Aorta (tissue), 5 donors: ENCODE measurements at regions of chr6 and their contacts with region 1.

Region 1: DNA sequence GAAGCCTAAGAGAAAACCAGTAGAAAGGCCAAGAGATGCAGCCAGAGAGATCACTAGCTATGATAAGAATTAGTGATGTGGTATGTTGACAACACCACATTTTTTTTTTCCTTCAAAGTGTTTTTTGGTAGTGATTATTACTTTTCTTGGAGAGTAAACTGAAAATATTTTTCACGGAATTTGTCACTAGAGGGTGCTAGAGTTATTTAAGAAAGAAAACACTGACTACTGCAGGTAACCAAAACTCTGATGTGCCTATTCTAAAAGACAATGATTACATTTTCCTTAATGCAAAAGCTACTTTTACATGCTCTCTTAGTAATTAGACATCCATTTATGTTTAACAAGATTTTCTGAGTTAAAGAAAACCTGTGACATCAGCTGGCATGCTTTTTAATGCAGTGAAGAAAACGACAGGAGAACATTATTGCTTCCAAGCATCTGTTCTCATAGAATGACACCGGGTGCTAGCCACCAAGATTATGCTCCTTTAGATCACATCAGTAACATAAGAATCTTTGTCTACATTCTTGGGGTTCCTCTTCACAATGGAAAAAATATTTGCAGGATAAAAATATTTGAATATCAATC is 28.8 kb downstream of the RWDD2A start:
- DNase-seq: no peak
- ATAC-seq: no peak
- H3K4me3 ChIP-seq: no peak overlapping the region
- H3K27ac ChIP-seq: no peak overlapping the region
- H3K4me1 ChIP-seq: peaks cover 0 to 3% of the 10 kb centered on the region in 2 donors
- H3K27me3 ChIP-seq: no peaks in the 10 kb centered on the region

Region 2: DNA sequence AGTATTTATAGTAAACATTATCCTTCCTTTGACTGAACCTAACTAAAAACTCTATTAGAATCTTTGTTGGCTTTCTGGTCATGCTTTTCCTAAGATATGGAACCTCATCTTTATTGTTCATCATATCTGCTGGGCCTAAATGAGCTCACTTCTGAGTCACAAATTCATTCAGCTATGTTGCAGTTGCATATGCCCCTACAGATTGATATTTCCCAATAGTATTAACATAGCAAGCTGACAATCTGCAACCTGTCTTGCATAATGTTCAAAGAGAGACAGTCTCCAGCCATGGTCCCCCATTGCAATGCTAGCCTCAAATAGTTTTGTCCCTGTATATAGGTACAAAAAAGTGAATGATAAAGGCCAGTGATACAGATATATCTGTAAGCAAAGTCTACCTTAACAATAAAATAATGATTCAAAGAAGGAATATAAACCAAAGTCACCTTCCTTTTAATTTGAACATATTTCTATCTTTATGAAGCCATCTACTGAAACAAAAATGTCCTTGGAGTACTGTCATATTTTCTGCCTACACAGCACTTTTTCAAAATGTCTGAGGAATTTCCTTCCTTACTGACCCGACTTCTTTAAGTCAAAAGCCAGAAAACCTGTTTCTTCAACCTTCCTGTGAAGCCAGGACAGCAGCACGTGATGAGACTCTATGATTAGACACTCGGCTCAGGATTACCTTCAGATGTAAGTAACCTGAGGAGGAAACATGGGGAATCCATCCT is 297.0 kb before region 1 on chr6:
- intact Hi-C with region 1: no loop called
- DNase-seq: no peak
- ATAC-seq: no peak
- H3K4me3 ChIP-seq: no peak overlapping the region
- H3K27ac ChIP-seq: no peak overlapping the region
- H3K4me1 ChIP-seq: no peaks in the 10 kb centered on the region
- H3K27me3 ChIP-seq: no peaks in the 10 kb centered on the region

Region 3: GRCh38 chr6:83378621-83379388 is 156.8 kb after region 1 on chr6:
- intact Hi-C with region 1: loop called in 1 of 2 experiments (anchors 10 kb)
- DNase-seq: no peak
- ATAC-seq: no peak
- H3K4me3 ChIP-seq: no peak overlapping the region
- H3K27ac ChIP-seq: no peak overlapping the region
- H3K4me1 ChIP-seq: peaks cover 0 to 1% of the 10 kb centered on the region in 2 donors
- H3K27me3 ChIP-seq: no peaks in the 10 kb centered on the region

Region 4: GRCh38 chr6:83417880-83418663 is 196.1 kb after region 1 on chr6:
- intact Hi-C with region 1: loop called (anchors 5 to 10 kb)
- DNase-seq: no peak
- ATAC-seq: peak; percentile 84
- H3K4me3 ChIP-seq: no peak overlapping the region
- H3K27ac ChIP-seq: no peak overlapping the region
- H3K4me1 ChIP-seq: peaks cover 0 to 2% of the 10 kb centered on the region in 2 donors
- H3K27me3 ChIP-seq: no peaks in the 10 kb centered on the region

Region 5: DNA sequence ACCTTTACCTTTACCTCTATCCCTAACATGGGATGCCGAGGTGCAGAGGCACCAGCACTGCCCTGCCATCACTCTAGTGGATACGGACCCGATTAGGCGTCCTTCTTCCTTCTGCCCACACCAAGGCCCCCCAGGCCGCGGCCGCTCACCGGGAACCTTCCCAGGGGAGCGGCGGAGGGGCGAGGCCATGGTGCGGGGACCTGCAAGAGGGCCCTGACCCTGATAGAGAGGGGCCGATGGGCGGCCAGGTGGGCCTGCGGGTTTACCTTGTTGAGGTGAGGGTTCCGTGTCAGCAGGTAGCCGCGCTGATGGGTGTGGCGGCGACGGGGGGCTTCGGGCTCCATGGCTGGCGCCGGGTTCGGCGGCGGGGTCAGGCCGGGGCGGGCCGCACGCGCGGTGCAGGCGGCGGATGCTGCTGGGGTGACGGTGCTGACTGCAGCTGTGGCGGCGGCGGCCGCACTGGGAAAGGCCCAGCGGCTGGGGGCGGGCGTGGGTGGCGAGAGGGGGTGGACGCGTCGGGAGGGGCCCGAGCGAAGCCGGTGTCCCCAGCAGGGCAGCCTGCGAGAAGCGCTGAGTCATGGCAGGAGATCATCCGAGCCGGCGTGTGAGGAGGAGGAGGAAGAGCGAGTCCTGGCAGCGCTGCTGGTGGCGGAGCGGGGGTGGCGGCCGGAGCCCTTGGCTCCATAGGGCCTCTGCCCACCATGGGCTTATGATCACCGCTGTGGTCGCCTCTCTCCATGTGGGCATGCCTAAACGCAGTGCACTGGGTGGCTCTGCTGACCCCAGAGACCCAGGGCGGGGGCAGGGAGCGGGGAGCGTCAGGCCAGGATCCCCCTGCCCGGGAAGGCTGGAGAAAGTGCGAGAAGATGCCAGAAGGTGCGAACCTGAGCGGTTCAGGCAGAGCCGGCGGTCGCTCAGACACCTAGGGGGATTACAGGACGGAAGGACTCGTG is 208.9 kb after region 1 on chr6 and contains the start of gene ME1:
- intact Hi-C with region 1: loop called (anchors 5 to 10 kb)
- DNase-seq: peak; percentile 93 to 95
- ATAC-seq: peak; percentile 91
- H3K4me3 ChIP-seq: peak within 1 kb of the TSS; percentile 19 to 69
- H3K27ac ChIP-seq: peak within 1 kb of the TSS in 1 of 2 donors; percentile 52
- H3K4me1 ChIP-seq: no peaks in the 10 kb centered on the region
- H3K27me3 ChIP-seq: no peaks in the 10 kb centered on the region
- total RNA-seq, gene ME1: 10.9 to 21.0 TPM

Region 6: DNA sequence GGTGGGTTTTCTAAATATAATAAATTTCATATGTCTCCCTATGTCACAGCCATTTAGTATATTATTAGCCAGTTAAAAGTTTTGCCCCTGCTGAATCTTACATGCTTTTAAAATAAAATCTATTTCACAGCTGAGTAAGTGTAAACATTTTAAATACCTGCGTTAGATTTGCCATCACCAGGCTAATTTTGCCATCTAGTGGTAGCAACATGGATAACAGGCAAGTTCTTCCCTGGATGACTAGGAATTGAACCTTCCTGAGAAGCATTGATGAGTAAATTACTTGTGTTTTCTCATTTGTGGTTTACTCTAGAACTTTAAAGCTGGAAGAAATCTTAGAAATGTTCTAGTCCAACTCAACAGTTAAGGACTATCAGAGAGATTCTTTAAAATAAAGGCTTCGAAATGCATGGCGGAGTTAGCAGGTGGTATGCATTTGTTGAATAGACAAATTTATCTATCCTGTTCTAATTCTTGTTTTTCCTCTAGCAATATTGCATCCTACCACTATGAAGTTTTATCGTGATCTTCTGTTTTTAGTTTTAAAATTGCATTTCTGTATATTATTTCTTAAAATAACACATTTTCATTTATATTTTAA is 293.0 kb after region 1 on chr6:
- intact Hi-C with region 1: loop called (anchors 2 kb)
- DNase-seq: no peak
- ATAC-seq: no peak
- H3K4me3 ChIP-seq: no peak overlapping the region
- H3K27ac ChIP-seq: no peak overlapping the region
- H3K4me1 ChIP-seq: peaks cover 0 to 2% of the 10 kb centered on the region in 2 donors
- H3K27me3 ChIP-seq: no peaks in the 10 kb centered on the region